ENCODE measurements at regions of chr15 and their contacts with region 1.

Region 1: GRCh38 chr15:40032125-40032839 is 6.7 kb downstream of the SRP14 start:
- DNase-seq: no peak
- H3K4me3 ChIP-seq: no peak overlapping the region
- CTCF ChIP-seq: no peak

Region 2: GRCh38 chr15:40044717-40045571 is 12.7 kb after region 1 on chr15:
- CTCF ChIA-PET with region 1: interaction called, 11 read pairs
- POLR2A ChIA-PET with region 1: no interaction called
- DNase-seq: no peak
- H3K4me3 ChIP-seq: peak overlapping the region; percentile 36
- CTCF ChIP-seq: peak; percentile 99